Esophagus squamous epithelium (tissue), 5 donors: ENCODE measurements at regions of chrX and their contacts with region 1.

Region 1: GRCh38 chrX:65581661-65582339 is 47.2 kb upstream of the LAS1L start:
- DNase-seq: no peak
- H3K4me3 ChIP-seq: no peak overlapping the region
- H3K27ac ChIP-seq: no peak overlapping the region
- H3K4me1 ChIP-seq: no peaks in the 10 kb centered on the region
- H3K27me3 ChIP-seq: no peaks in the 10 kb centered on the region
- CTCF ChIP-seq: peak in 5 of 6 experiments; percentile 58 to 85 (median 76)
- POLR2A ChIP-seq: no peak

Region 2: GRCh38 chrX:65516756-65517155 is 65.0 kb before region 1 on chrX:
- intact Hi-C with region 1: no loop called
- DNase-seq: no peak
- H3K4me3 ChIP-seq: no peak overlapping the region
- H3K27ac ChIP-seq: no peak overlapping the region
- H3K4me1 ChIP-seq: no peaks in the 10 kb centered on the region
- H3K27me3 ChIP-seq: no peaks in the 10 kb centered on the region
- CTCF ChIP-seq: no peak
- POLR2A ChIP-seq: no peak

Region 3: DNA sequence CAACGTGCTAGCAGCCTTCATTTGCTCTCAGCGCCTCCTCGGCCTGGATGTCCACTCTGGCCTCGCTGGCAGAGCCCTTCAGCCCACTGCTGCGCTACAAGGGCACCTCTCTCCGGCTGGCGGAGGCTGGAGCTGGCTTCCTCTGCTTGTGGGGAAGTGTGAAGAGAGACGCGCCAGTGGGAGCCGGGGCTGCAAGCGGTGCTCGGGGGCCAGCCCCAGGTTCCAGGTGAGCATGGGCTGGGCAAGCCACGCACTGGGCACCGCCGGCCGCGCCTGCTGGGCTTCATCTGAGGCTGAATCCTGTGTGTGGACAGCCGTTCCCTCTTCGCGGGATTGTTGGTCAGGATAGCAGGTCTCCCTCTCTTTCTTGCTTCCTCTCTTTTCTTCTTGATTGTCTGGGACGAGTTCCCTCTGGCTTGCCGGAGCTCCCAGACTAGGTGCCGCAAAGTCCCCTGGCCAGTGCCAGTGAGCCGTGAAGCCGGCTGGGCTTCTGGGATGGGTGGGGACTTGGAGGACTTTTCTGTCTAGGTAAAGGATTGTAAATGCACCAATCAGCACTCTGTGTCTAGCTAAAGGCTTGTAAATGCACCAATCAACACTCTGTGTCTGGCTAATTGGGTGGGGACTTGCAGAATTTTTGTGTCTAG is 747.3 kb after region 1 on chrX:
- intact Hi-C with region 1: no loop called
- DNase-seq: no peak
- H3K4me3 ChIP-seq: no peak overlapping the region
- H3K27ac ChIP-seq: no peak overlapping the region
- H3K4me1 ChIP-seq: no peaks in the 10 kb centered on the region
- H3K27me3 ChIP-seq: no peaks in the 10 kb centered on the region
- CTCF ChIP-seq: no peak
- POLR2A ChIP-seq: no peak

Region 4: DNA sequence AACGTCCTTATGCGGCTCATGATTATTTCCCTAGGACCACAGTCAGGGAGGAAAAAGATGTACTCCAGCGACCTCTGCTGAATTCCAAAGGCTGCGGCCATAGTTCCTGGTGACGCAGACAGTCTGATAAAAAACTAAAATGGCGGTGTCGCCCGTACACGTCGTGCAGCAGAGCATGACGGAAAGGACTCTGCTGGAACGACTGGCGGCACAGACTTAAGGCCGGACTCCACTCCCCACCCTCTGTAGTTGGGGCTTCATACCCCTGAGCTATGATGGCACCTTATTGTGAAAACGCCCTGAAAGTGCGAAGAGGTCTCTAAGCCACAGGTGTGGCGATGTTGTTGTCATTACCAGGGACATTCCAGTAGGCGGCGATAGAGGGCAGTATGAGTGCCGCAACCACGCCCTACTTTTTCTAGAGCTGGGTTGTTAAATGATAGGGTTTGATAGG is 1147.0 kb after region 1 on chrX:
- intact Hi-C with region 1: loop called (anchors 10 kb)
- DNase-seq: no peak
- H3K4me3 ChIP-seq: peak overlapping the region; percentile 14 to 62 (median 30)
- H3K27ac ChIP-seq: no peak overlapping the region
- H3K4me1 ChIP-seq: no peaks in the 10 kb centered on the region
- H3K27me3 ChIP-seq: no peaks in the 10 kb centered on the region
- CTCF ChIP-seq: peak; percentile 24 to 65 (median 39)
- POLR2A ChIP-seq: no peak